ENCODE measurements at regions of chr5 and their contacts with region 1.

Region 1: GRCh38 chr5:66306105-66306843 is 162.2 kb downstream of the SREK1 start:
- DNase-seq: peak; percentile 58
- ATAC-seq: peak; percentile 75
- H3K4me3 ChIP-seq: no peak overlapping the region
- H3K4me3 Mint-ChIP-seq: no peak overlapping the region
- H3K27ac ChIP-seq: no peak overlapping the region
- H3K27ac Mint-ChIP-seq: no peak overlapping the region
- H3K4me1 ChIP-seq: no peaks in the 10 kb centered on the region
- H3K4me1 Mint-ChIP-seq: no peaks in the 10 kb centered on the region
- H3K27me3 ChIP-seq: peaks cover 0 to 15% (median 2%) of the 10 kb centered on the region in 4 experiments
- H3K27me3 Mint-ChIP-seq: peaks cover 20% of the 10 kb centered on the region
- CTCF ChIP-seq: peak; percentile 84

Region 2: DNA sequence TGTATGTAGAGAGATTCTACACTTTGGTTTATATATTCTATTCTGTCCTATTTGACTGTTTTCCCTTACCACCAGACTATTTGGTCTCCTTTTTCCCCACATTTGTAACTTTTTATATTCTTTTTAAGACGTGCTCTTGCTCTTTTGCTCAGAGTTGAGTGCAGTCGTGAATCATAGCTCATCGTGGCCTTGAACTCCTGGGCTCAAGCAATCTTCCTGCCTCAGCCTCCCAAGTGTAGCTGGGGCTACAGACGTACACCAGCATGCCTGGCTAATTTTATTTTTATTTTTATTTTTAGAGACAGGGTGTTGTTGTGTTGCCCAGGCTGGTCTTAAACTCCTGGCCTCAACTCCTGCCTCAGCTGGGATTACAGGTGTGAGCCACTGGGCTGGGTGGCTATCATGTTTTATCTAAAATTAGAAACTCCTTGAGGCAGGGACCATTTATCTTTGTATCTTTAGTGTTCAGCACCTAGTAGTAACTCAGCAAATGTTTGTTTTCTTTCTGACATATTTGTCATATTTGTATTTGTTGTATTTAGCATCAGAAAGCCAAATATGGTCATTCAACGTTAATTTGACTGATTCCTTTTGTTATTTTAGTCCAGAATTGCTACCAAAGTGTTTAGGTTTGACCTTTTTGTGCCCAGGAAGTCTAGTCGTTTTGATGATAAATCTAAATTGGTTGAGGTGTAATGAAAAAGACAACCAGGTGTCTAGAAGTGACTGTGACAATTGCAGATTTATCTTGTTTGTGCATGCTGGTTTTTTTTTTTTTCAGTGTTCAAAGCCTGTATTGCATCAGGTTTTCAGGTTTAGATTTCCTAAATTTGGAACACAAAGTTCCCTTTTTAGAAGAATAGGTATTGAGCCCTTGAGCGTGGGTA is 335.6 kb before region 1 on chr5:
- CTCF ChIA-PET with region 1: no interaction called
- POLR2A ChIA-PET with region 1: no interaction called
- intact Hi-C with region 1: no loop called
- DNase-seq: no peak
- ATAC-seq: no peak
- H3K4me3 ChIP-seq: no peak overlapping the region
- H3K4me3 Mint-ChIP-seq: peak overlapping the region; percentile 23
- H3K27ac ChIP-seq: peak overlapping the region in 1 of 2 donors; percentile 48
- H3K27ac Mint-ChIP-seq: no peak overlapping the region
- H3K4me1 ChIP-seq: peaks cover 11 to 33% of the 10 kb centered on the region in 2 donors
- H3K4me1 Mint-ChIP-seq: peaks cover 58% of the 10 kb centered on the region
- H3K27me3 ChIP-seq: no peaks in the 10 kb centered on the region
- H3K27me3 Mint-ChIP-seq: no peaks in the 10 kb centered on the region
- CTCF ChIP-seq: no peak

Region 3: GRCh38 chr5:66171349-66172344 is 134.6 kb before region 1 on chr5:
- CTCF ChIA-PET with region 1: interaction called, 6 read pairs
- POLR2A ChIA-PET with region 1: no interaction called
- intact Hi-C with region 1: loop called (anchors 2 kb)
- DNase-seq: peak; percentile 71
- ATAC-seq: peak; percentile 64
- H3K4me3 ChIP-seq: no peak overlapping the region
- H3K4me3 Mint-ChIP-seq: no peak overlapping the region
- H3K27ac ChIP-seq: peak overlapping the region; percentile 18 to 60
- H3K27ac Mint-ChIP-seq: no peak overlapping the region
- H3K4me1 ChIP-seq: peaks cover 0 to 8% of the 10 kb centered on the region in 2 donors
- H3K4me1 Mint-ChIP-seq: peaks cover 20% of the 10 kb centered on the region
- H3K27me3 ChIP-seq: no peaks in the 10 kb centered on the region
- H3K27me3 Mint-ChIP-seq: no peaks in the 10 kb centered on the region
- CTCF ChIP-seq: peak; percentile 70

Region 4: GRCh38 chr5:66469684-66470083 is 163.4 kb after region 1 on chr5:
- CTCF ChIA-PET with region 1: interaction called, 10 read pairs
- POLR2A ChIA-PET with region 1: no interaction called
- intact Hi-C with region 1: loop called (anchors 2 kb)
- DNase-seq: no peak
- ATAC-seq: no peak
- H3K4me3 ChIP-seq: no peak overlapping the region
- H3K4me3 Mint-ChIP-seq: no peak overlapping the region
- H3K27ac ChIP-seq: no peak overlapping the region
- H3K27ac Mint-ChIP-seq: no peak overlapping the region
- H3K4me1 ChIP-seq: peaks cover 4 to 8% of the 10 kb centered on the region in 2 donors
- H3K4me1 Mint-ChIP-seq: peaks cover 13% of the 10 kb centered on the region
- H3K27me3 ChIP-seq: no peaks in the 10 kb centered on the region
- H3K27me3 Mint-ChIP-seq: no peaks in the 10 kb centered on the region
- CTCF ChIP-seq: no peak

Region 5: GRCh38 chr5:66724349-66725139 is 418.3 kb after region 1 on chr5:
- CTCF ChIA-PET with region 1: interaction called, 69 read pairs
- POLR2A ChIA-PET with region 1: no interaction called
- intact Hi-C with region 1: no loop called
- DNase-seq: no peak
- ATAC-seq: no peak
- H3K4me3 ChIP-seq: no peak overlapping the region
- H3K4me3 Mint-ChIP-seq: no peak overlapping the region
- H3K27ac ChIP-seq: no peak overlapping the region
- H3K27ac Mint-ChIP-seq: no peak overlapping the region
- H3K4me1 ChIP-seq: no peaks in the 10 kb centered on the region
- H3K4me1 Mint-ChIP-seq: no peaks in the 10 kb centered on the region
- H3K27me3 ChIP-seq: peaks cover 0 to 3% (median 0%) of the 10 kb centered on the region in 4 experiments
- H3K27me3 Mint-ChIP-seq: no peaks in the 10 kb centered on the region
- CTCF ChIP-seq: no peak

Region 6: DNA sequence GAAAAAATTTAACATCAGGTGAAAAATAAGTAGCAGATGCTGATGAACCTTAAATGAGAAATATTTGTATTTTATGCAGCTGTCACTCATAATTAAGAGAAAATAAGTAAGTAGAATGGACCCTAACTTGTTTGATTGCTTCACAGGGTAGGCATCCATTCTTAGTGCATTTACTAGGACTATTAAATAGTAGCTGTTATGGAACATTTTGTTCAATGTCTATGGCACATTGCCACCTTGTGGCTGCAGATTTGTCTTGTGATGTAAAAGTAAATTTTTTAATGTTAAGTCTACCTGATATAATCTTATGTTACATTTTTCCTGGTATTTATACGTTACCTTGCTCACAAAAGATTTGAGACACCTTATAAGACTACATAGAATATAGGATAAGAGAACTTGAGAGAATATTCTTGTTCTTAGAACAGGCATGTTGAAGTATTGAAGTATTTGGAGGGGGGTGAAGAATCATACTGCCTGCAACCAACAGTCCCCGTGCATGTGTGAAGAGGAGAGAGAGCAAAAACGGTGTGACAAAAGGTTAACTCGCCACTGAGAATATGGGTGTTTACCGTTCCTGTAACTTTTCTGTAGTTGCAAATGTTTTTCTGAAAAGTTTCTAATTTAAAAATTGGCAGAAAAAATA is 451.0 kb after region 1 on chr5:
- CTCF ChIA-PET with region 1: interaction called, 462 read pairs
- POLR2A ChIA-PET with region 1: interaction called, 6 read pairs
- intact Hi-C with region 1: loop called (anchors 1 kb)
- DNase-seq: peak; percentile 63
- ATAC-seq: peak; percentile 51
- H3K4me3 ChIP-seq: no peak overlapping the region
- H3K4me3 Mint-ChIP-seq: no peak overlapping the region
- H3K27ac ChIP-seq: no peak overlapping the region
- H3K27ac Mint-ChIP-seq: no peak overlapping the region
- H3K4me1 ChIP-seq: peaks cover 0 to 5% of the 10 kb centered on the region in 2 donors
- H3K4me1 Mint-ChIP-seq: peaks cover 8% of the 10 kb centered on the region
- H3K27me3 ChIP-seq: no peaks in the 10 kb centered on the region
- H3K27me3 Mint-ChIP-seq: peaks cover 14% of the 10 kb centered on the region
- CTCF ChIP-seq: peak; percentile 77

Measured in B cell (primary cell).